Activated CD4-positive, alpha-beta memory T cell treated with anti-CD3 and anti-CD28 coated beads, Interleukin-2, amount 10 ng/mL, durations not matched to agents 7 days and 5 days (primary cell): ENCODE measurements at regions of chr20 and their contacts with region 1.

Region 1: GRCh38 chr20:40962730-40963504 is 65.7 kb upstream of the TOP1 start:
- DNase-seq: peak; percentile 80
- H3K4me3 Mint-ChIP-seq: no peak overlapping the region
- H3K27ac Mint-ChIP-seq: no peak overlapping the region
- H3K4me1 Mint-ChIP-seq: peaks cover 18% of the 10 kb centered on the region
- H3K27me3 Mint-ChIP-seq: peaks cover 1% of the 10 kb centered on the region

Region 2: DNA sequence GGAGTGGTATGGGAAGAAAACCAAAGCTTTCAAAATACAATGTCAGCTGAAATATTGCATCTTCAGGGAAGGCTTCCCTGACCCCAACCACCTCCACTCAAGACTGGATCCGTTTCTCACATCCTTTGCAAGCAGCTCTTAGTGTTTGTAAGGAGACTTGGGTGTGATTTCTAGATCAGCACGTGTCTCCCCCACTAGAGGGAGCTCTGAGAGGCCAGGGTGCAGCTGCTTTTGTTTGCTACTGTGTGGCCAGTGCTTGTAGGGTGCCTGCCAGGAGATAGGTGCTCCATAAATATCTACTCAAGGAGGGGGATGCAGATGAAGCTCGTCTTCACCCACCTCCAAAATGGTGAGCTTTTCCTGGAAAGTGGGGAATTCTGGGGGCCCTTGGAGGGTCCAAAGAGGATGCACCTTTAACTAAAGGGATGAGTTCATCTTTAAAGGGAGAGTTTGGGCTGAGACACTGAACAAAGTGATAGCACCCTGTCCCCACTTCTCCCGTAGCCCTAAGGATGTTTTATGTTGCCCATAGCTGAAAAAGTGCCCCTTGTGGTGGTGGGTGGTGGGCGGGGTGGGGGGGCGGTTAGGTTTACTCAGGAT is 221.3 kb before region 1 on chr20:
- CTCF ChIA-PET with region 1: interaction called, 57 read pairs
- POLR2A ChIA-PET with region 1: no interaction called
- DNase-seq: peak; percentile 60
- H3K4me3 Mint-ChIP-seq: no peak overlapping the region
- H3K27ac Mint-ChIP-seq: no peak overlapping the region
- H3K4me1 Mint-ChIP-seq: no peaks in the 10 kb centered on the region
- H3K27me3 Mint-ChIP-seq: peaks cover 1% of the 10 kb centered on the region

Region 3: DNA sequence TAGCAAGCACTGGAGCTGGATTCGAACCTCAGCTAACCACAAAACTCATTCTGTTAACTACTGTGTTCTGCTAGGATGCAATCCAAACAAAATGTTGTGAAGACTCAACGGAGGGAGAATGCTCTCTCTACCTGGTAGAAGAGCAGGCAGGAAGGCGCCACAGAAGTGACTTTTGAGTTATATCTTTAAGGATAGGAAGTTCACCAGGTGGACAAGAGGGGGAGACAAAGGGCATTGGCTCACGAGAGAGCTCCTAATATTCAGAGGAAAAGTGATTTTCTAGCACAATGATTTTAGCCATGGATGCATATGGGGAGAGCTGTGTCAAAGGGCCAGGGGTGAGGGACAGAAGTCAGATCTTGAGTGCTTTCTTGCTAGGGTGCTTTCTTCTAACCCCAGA is 165.5 kb before region 1 on chr20:
- CTCF ChIA-PET with region 1: interaction called, 27 read pairs
- POLR2A ChIA-PET with region 1: interaction called, 3 read pairs
- DNase-seq: no peak
- H3K4me3 Mint-ChIP-seq: no peak overlapping the region
- H3K27ac Mint-ChIP-seq: no peak overlapping the region
- H3K4me1 Mint-ChIP-seq: no peaks in the 10 kb centered on the region
- H3K27me3 Mint-ChIP-seq: peaks cover 26% of the 10 kb centered on the region

Region 4: GRCh38 chr20:41095110-41095969 is 132.4 kb after region 1 on chr20:
- CTCF ChIA-PET with region 1: interaction called, 60 read pairs
- POLR2A ChIA-PET with region 1: interaction called, 4 read pairs
- DNase-seq: peak; percentile 63
- H3K4me3 Mint-ChIP-seq: no peak overlapping the region
- H3K27ac Mint-ChIP-seq: no peak overlapping the region
- H3K4me1 Mint-ChIP-seq: peaks cover 4% of the 10 kb centered on the region
- H3K27me3 Mint-ChIP-seq: no peaks in the 10 kb centered on the region